Tibial artery (tissue), 4 donors: ENCODE measurements at regions of chr3 and their contacts with region 1.

Region 1: GRCh38 chr3:45534632-45535031 is 59.9 kb upstream of the LIMD1 start:
- DNase-seq: no peak
- H3K4me3 ChIP-seq: no peak overlapping the region
- H3K27ac ChIP-seq: no peak overlapping the region
- H3K4me1 ChIP-seq: peaks cover 0 to 6% (median 0%) of the 10 kb centered on the region in 4 donors
- H3K27me3 ChIP-seq: no peaks in the 10 kb centered on the region
- CTCF ChIP-seq: no peak

Region 2: GRCh38 chr3:45437383-45437782 is 97.2 kb before region 1 on chr3:
- intact Hi-C with region 1: no loop called
- DNase-seq: no peak
- H3K4me3 ChIP-seq: no peak overlapping the region
- H3K27ac ChIP-seq: no peak overlapping the region
- H3K4me1 ChIP-seq: no peaks in the 10 kb centered on the region
- H3K27me3 ChIP-seq: no peaks in the 10 kb centered on the region
- CTCF ChIP-seq: no peak

Region 3: DNA sequence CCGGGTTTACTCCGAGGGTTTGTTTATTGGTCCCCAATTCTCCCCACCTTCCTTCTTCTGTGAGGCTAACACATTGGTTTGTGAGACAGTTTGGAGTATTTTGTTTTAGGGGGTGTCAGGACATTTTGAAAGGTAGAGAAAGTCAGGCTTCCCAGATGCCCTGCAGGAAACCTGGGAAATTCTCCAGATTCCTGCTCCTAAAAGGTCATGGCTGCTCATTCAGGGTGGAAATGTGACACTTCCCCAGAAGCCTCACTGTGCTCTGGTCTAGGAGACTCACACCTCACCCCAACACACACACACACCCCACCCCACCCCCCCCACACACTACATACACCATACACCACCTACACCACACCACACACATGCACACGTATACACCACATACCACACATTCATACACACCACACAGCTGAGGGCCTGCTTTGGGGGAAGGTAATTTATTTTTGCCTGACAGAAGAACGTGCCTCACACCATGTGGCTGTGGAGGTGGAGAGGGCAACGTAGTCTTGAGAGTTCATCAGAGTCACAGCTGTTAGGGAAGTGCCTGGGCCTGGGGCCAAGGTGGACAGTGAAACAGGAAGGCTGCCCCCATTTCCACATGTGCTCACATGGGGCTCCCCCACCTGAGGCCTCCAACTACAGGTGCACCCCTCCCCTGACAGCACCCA is 19.5 kb after region 1 on chr3:
- intact Hi-C with region 1: no loop called
- DNase-seq: peak in 1 of 2 donors; percentile 65
- H3K4me3 ChIP-seq: no peak overlapping the region
- H3K27ac ChIP-seq: peak overlapping the region in 1 of 2 donors; percentile 47
- H3K4me1 ChIP-seq: peaks cover 10 to 43% (median 31%) of the 10 kb centered on the region in 4 donors
- H3K27me3 ChIP-seq: no peaks in the 10 kb centered on the region
- CTCF ChIP-seq: no peak

Region 4: DNA sequence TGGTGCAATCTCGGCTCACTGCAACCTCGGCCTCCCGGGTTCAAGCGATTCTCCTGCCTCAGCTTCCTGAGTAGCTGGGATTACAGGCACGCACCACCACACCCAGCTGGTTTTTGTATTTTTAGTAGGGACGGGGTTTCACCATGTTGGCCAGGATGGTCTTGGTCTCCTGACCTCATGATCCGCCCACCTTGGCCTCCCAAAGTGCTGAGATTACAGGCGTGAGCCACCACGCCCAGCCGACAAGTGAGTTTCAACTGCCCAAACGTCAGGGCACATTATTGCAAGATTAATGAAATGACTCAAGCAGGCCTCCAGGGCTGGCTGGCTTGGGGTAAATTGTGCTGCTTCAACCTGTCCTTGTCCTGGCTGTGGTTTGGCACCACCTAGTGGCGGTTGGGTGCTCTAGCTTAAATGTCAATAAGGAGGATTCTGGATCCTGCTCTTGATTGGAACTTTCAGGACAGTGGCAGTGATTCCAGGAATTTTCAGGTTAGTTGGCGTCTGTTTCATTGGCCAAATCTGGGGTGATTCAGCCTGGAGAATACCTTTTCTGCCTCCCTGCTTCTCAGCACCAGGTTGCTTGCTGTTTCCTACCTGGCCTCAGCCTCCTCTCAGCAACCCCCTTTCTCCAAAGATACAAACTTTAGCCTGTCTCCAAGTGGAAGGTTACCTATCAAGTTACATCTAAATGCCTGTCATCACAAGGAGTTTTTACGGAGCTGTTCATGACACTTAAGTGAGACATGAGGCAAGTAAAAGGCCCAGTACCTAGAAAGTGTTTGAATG is 122.1 kb after region 1 on chr3:
- intact Hi-C with region 1: no loop called
- DNase-seq: peak; percentile 94 to 95
- H3K4me3 ChIP-seq: no peak overlapping the region
- H3K27ac ChIP-seq: peak overlapping the region in 1 of 2 donors; percentile 70
- H3K4me1 ChIP-seq: peaks cover 0 to 60% (median 25%) of the 10 kb centered on the region in 4 donors
- H3K27me3 ChIP-seq: no peaks in the 10 kb centered on the region
- CTCF ChIP-seq: peak; percentile 97 to 98

Region 5: DNA sequence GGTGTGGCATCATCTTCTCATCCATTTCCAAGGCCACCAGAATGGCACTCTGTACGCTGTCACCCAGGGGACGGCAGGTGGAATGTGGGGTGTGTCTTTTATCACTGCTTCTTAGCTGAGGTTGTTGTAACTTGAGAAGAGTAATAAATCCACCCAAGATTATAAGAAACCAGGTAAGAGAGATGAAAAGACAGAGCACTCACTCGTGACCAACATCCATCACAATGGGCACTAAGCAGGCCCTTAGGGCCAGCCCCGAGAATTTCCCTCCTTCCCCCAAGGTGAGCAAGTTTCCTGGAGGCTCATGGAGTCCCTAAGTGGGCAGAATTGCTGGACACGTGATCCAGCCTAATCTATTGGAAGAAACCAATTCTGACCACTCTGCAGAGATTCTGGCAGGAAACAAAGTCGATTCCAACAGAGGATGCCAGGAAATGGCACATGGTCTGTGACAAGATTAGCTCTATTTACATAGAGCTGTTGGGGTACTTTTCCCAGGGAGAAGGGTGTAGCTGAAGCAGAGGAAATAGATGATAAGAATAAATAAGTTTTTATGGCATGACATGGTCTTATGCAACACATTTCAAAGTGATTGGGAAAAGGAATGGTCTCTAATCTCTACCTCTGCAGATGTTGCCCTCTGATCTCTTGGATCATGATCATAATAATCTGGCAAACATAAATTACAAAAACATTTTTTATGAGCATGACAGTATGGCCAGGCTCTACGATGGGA is 239.2 kb after region 1 on chr3:
- intact Hi-C with region 1: no loop called
- DNase-seq: no peak
- H3K4me3 ChIP-seq: no peak overlapping the region
- H3K27ac ChIP-seq: no peak overlapping the region
- H3K4me1 ChIP-seq: no peaks in the 10 kb centered on the region
- H3K27me3 ChIP-seq: peaks cover 0 to 11% of the 10 kb centered on the region in 2 donors
- CTCF ChIP-seq: no peak

Region 6: GRCh38 chr3:46442576-46443562 is 908.2 kb after region 1 on chr3:
- intact Hi-C with region 1: loop called (anchors 5 kb)
- DNase-seq: no peak
- H3K4me3 ChIP-seq: no peak overlapping the region
- H3K27ac ChIP-seq: no peak overlapping the region
- H3K4me1 ChIP-seq: peaks cover 0 to 5% (median 0%) of the 10 kb centered on the region in 4 donors
- H3K27me3 ChIP-seq: no peaks in the 10 kb centered on the region
- CTCF ChIP-seq: no peak